Transverse colon (tissue), 4 donors: ENCODE measurements at regions of chr4 and their contacts with region 1.

Region 1: GRCh38 chr4:180285796-180286195 is 1957.4 kb upstream of the TENM3 start:
- DNase-seq: no peak
- H3K4me3 ChIP-seq: no peak overlapping the region
- H3K27ac ChIP-seq: no peak overlapping the region
- H3K4me1 ChIP-seq: no peaks in the 10 kb centered on the region
- H3K27me3 ChIP-seq: no peaks in the 10 kb centered on the region
- CTCF ChIP-seq: no peak
- EP300 ChIP-seq: no peak
- POLR2A ChIP-seq: no peak

Region 2: GRCh38 chr4:180240670-180241069 is 45.1 kb before region 1 on chr4:
- in situ Hi-C with region 1: no loop called
- intact Hi-C with region 1: no loop called
- DNase-seq: no peak
- H3K4me3 ChIP-seq: no peak overlapping the region
- H3K27ac ChIP-seq: no peak overlapping the region
- H3K4me1 ChIP-seq: no peaks in the 10 kb centered on the region
- H3K27me3 ChIP-seq: no peaks in the 10 kb centered on the region
- CTCF ChIP-seq: no peak
- EP300 ChIP-seq: no peak
- POLR2A ChIP-seq: no peak

Region 3: GRCh38 chr4:180356766-180357165 is 71.0 kb after region 1 on chr4:
- in situ Hi-C with region 1: no loop called
- intact Hi-C with region 1: loop called (anchors 2 kb)
- DNase-seq: no peak
- H3K4me3 ChIP-seq: no peak overlapping the region
- H3K27ac ChIP-seq: no peak overlapping the region
- H3K4me1 ChIP-seq: no peaks in the 10 kb centered on the region
- H3K27me3 ChIP-seq: no peaks in the 10 kb centered on the region
- CTCF ChIP-seq: no peak
- EP300 ChIP-seq: no peak
- POLR2A ChIP-seq: no peak